BJ (cell line): ENCODE measurements at regions of chr7 and their contacts with region 1.

Region 1: GRCh38 chr7:74417419-74417971 is 36.2 kb upstream of the GTF2IRD1 start:
- DNase-seq: no peak
- H3K4me3 ChIP-seq: no peak overlapping the region
- H3K27me3 ChIP-seq: no peaks in the 10 kb centered on the region
- CTCF ChIP-seq: peak; percentile 98

Region 2: DNA sequence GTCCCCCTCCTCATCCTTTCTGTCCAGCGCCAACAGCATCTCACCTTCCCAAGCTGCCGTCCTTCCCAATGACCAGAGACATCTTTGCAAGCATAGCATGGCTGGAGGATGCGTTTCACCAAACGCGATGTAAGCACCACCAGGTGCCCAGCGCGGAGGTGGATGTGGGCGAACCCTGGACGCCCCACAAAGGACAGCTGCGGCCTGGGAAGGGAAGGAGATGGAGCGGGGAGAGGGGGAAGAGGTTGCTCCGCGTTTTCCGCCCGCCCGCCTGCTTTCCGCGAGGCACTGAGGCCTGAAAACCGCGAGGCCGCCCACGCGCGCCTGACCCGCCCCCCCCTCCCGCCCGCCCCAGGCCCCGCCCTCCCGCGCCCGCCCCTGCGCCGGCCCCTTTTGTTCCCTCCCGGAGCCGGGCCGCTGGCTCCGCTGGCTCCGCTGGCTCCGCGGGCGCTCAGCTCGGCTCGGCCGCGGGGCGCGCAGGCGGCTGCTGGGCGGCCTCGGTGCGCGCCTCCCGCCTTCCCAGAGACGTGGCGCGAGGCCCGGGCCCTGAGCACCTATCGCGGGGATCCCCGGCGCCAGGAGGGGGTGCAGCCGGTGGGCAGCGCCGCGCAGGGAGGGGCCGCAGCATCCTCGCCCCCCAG is 128.4 kb before region 1 on chr7 and contains the start of gene CLIP2:
- CTCF ChIA-PET with region 1: no interaction called
- POLR2A ChIA-PET with region 1: no interaction called
- DNase-seq: no peak
- H3K4me3 ChIP-seq: peak within 1 kb of the TSS; percentile 94
- H3K27me3 ChIP-seq: no peaks in the 10 kb centered on the region
- CTCF ChIP-seq: no peak
- polyA plus RNA-seq, gene CLIP2: 4.0 and 5.6 TPM in 2 replicates

Region 3: GRCh38 chr7:74379938-74380337 is 37.6 kb before region 1 on chr7:
- CTCF ChIA-PET with region 1: no interaction called
- POLR2A ChIA-PET with region 1: no interaction called
- DNase-seq: no peak
- H3K4me3 ChIP-seq: no peak overlapping the region
- H3K27me3 ChIP-seq: no peaks in the 10 kb centered on the region
- CTCF ChIP-seq: no peak

Region 4: DNA sequence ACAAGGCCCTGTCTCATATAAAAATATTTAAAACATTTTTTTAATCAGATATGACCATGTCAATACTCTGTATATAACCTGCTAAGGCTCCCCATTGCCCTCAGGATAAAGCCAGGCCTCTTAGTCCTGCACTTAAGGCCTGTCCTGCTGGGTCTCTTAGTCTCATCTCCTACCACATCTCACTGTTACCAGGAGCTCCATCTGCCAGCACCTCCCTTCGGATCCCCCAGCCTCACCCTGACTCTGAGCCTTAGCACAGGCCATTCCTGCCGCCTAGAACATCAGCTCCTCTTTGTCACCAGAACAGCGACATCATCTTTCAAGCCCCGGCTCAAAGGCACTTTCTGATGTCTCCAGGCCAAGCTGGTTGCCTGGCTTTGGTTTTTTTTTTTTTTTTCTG is 10.5 kb after region 1 on chr7:
- CTCF ChIA-PET with region 1: interaction called, 13 read pairs
- POLR2A ChIA-PET with region 1: no interaction called
- DNase-seq: no peak
- H3K4me3 ChIP-seq: no peak overlapping the region
- H3K27me3 ChIP-seq: no peaks in the 10 kb centered on the region
- CTCF ChIP-seq: no peak

Region 5: GRCh38 chr7:74569501-74570075 is 152.1 kb after region 1 on chr7:
- CTCF ChIA-PET with region 1: interaction called, 73 read pairs
- POLR2A ChIA-PET with region 1: no interaction called
- DNase-seq: no peak
- H3K4me3 ChIP-seq: no peak overlapping the region
- H3K27me3 ChIP-seq: no peaks in the 10 kb centered on the region
- CTCF ChIP-seq: no peak